Transverse colon (tissue), 4 donors: ENCODE measurements at regions of chr5 and their contacts with region 1.

Region 1: GRCh38 chr5:13987843-13988464 is 43.5 kb upstream of the DNAH5 start:
- DNase-seq: peak; percentile 37
- H3K4me3 ChIP-seq: no peak overlapping the region
- H3K27ac ChIP-seq: no peak overlapping the region
- H3K4me1 ChIP-seq: peaks cover 0 to 3% (median 0%) of the 10 kb centered on the region in 4 donors
- H3K27me3 ChIP-seq: no peaks in the 10 kb centered on the region
- CTCF ChIP-seq: peak; percentile 78 to 88 (median 81)
- EP300 ChIP-seq: no peak
- POLR2A ChIP-seq: no peak

Region 2: DNA sequence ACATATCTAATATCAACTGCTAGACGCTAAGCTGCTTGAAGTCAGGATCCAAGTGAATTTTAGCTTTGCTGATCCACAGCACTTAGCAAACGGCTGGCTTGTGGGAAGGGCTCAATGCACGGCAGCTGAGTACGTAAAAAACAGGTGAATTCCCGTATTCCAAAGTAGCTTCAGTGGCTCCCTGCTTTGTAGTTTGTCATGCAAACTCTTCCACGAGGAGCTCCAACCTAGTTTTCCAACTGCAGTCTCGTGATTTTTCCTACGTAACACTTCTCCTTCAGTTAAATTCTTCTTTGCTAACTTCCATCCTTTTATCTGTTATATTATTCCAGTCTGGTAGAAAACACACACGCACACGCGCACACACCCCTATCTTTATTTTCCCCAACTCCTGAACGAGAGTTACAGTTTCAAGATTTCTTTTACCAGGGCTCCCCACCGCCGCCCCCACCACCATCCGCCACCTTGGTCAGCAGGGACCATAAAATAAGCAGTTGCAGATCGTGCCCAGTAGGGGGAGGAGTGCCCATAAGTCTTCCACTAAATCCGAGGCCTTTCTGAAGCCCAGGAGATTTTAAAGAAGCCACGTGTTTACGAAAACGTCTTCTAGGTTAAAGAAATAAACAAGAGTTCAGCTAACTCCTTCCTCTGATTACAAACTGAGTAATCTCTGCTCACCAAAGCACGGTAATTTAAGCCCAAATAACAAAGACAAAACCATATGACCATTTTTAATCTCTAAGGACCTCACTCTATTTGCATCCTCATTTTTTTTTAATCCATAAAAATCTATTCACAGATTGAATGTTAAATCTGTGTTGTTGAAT is 120.4 kb after region 1 on chr5:
- in situ Hi-C with region 1: loop called in 1 of 4 experiments (anchors 25 kb)
- intact Hi-C with region 1: no loop called
- DNase-seq: peak; percentile 72
- H3K4me3 ChIP-seq: peak overlapping the region in 3 of 4 donors; percentile 13 to 38 (median 19)
- H3K27ac ChIP-seq: peak overlapping the region in 1 of 4 donors; percentile 35
- H3K4me1 ChIP-seq: peaks cover 0 to 12% (median 4%) of the 10 kb centered on the region in 4 donors
- H3K27me3 ChIP-seq: no peaks in the 10 kb centered on the region
- CTCF ChIP-seq: peak; percentile 69 to 85 (median 75)
- EP300 ChIP-seq: no peak
- POLR2A ChIP-seq: no peak

Region 3: GRCh38 chr5:14286574-14287421 is 298.8 kb after region 1 on chr5:
- in situ Hi-C with region 1: loop called in 2 of 4 experiments (anchors 25 kb)
- intact Hi-C with region 1: no loop called
- DNase-seq: no peak
- H3K4me3 ChIP-seq: no peak overlapping the region
- H3K27ac ChIP-seq: no peak overlapping the region
- H3K4me1 ChIP-seq: peaks cover 0 to 6% (median under 1%) of the 10 kb centered on the region in 4 donors
- H3K27me3 ChIP-seq: no peaks in the 10 kb centered on the region
- CTCF ChIP-seq: no peak
- EP300 ChIP-seq: no peak
- POLR2A ChIP-seq: no peak

Region 4: DNA sequence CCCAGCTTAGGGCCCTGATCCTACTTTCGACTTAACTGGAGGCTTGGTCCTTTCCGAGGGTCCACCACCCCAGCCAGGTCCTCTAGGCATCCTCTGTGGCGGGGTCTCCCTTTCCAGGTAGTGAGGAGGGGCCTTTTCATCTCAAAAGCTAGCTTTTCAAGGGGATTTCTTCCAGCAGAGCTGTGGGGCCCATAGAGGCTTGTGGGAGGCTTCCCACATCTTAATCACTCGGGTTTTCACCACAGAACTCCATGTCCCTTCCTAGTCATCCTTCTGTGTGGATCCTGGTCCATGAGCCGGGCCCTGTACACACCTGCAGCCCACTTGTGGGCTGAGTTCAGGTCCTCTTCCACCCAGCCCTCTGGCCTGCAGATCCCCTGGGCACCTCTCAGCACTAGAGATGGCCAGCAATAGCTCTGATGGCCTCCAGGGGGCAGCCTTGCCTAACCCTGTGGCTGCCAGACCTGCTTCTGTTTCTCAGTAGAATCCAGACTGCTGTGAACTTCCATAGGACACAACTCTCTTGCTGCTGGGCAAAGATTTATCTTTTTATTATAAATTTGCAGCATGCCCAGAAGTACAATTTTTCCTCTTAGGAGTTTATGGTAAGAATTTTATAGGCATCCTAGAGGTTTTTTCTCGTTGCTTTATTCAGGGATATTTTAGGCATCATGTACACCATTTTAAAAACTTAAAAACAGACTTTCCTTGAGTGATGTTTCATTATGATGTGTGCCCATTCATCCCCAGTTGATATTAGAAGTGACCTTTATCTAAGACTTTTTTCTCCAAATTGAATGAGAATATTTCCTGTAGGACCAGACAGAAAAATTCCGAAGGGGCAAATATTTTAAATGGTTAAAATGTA is 364.1 kb after region 1 on chr5:
- in situ Hi-C with region 1: loop called in 2 of 4 experiments (anchors 25 kb)
- intact Hi-C with region 1: loop called (anchors 10 kb)
- DNase-seq: peak; percentile 66
- H3K4me3 ChIP-seq: no peak overlapping the region
- H3K27ac ChIP-seq: no peak overlapping the region
- H3K4me1 ChIP-seq: peaks cover 0 to 4% (median 0%) of the 10 kb centered on the region in 4 donors
- H3K27me3 ChIP-seq: no peaks in the 10 kb centered on the region
- CTCF ChIP-seq: peak; percentile 79 to 95 (median 95)
- EP300 ChIP-seq: no peak
- POLR2A ChIP-seq: no peak

Region 5: GRCh38 chr5:14628346-14628745 is 640.4 kb after region 1 on chr5:
- in situ Hi-C with region 1: loop called (anchors 25 kb)
- intact Hi-C with region 1: no loop called
- DNase-seq: no peak
- H3K4me3 ChIP-seq: no peak overlapping the region
- H3K27ac ChIP-seq: no peak overlapping the region
- H3K4me1 ChIP-seq: no peaks in the 10 kb centered on the region
- H3K27me3 ChIP-seq: no peaks in the 10 kb centered on the region
- CTCF ChIP-seq: no peak
- EP300 ChIP-seq: no peak
- POLR2A ChIP-seq: no peak